GM10248 (cell line): ENCODE measurements at regions of chr6 and their contacts with region 1.

Region 1: GRCh38 chr6:41920921-41921711 is at the starts of genes BYSL and MED20:
- DNase-seq: peak; percentile 96
- CTCF ChIP-seq: peak; percentile 92

Region 2: DNA sequence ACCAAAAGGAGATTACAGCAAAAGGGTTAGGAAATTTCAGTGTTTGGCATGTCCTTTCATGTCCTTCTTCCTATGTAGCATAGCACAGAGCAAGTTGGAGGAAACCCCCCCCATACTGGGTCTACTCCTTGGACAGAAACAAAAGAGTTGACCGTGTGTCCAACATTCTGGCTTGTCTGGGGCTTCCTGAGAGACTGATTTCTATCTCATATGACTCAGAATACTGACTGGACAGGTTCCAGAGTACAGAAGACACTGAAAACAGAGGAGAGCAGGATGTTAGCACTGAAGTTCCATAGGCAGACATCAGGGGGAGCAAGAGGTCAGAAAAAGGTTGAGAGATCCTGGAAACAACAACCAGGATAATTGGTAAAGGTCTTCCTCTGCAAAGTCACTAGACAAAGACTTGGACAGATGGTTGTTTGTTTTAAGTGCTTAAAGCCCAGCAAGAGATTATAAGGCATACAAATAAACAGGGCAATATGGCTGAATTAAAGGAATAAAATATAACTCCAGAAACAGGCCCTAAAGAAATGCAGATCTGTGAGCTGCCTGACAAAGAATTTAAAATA is 74.4 kb before region 1 on chr6:
- CTCF ChIA-PET with region 1: interaction called, 11 read pairs
- POLR2A ChIA-PET with region 1: no interaction called
- DNase-seq: peak; percentile 70
- CTCF ChIP-seq: peak; percentile 61

Region 3: DNA sequence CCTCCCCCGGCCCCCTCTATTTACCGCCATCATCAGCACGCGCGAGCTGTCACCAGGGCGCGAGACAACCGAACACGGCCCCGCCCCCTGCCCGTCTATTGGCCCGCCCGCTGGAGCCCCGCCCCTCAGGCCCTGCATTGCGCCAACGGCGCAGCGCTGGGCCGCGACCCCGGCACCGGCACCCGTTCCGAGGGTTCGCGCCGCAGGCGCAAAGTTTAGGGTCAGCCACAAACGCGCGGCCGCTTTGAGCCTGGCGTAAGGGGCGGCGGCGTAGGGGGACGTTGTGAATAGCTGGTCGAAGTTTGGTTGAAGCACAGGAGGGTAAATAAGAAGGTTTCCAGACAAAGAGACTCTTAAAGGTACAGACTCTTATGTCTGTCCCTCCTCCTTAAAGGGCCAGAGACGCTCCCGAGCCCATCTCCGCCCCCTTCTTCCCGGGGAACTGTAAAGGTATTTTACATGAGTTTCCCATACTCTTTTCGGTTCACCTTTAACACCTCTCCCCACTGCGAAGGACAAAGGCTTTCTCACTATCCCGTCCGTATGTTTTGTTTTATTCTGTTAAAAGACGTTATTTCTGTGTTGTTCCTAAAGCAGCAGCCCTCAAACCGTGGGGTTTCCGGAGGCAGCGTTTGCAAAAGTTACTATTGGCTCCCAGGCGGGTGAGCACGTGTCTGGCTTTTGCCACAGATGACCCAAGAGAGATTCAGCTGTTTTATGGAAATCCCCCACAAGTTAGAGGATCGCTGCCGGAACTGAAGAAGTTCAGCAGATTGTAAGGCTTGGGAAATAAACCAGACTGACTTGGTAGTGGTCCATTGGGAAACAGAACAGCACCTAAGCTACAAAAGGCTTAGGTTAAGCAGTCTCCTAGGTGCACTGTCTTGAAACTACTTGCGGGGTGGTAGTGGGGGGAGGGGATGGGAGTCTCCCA is 25.5 kb before region 1 on chr6 and contains the start of gene USP49:
- CTCF ChIA-PET with region 1: interaction called, 16 read pairs
- POLR2A ChIA-PET with region 1: interaction called, 9 read pairs
- DNase-seq: peak; percentile 94
- CTCF ChIP-seq: no peak

Region 4: GRCh38 chr6:41901882-41902519 is 19.1 kb before region 1 on chr6:
- CTCF ChIA-PET with region 1: interaction called, 22 read pairs
- POLR2A ChIA-PET with region 1: no interaction called
- DNase-seq: peak; percentile 30
- CTCF ChIP-seq: peak; percentile 22

Region 5: GRCh38 chr6:41936073-41936837 is 15.1 kb after region 1 on chr6:
- CTCF ChIA-PET with region 1: interaction called, 116 read pairs
- POLR2A ChIA-PET with region 1: interaction called, 5 read pairs
- DNase-seq: peak; percentile 78
- CTCF ChIP-seq: peak; percentile 82

Region 6: DNA sequence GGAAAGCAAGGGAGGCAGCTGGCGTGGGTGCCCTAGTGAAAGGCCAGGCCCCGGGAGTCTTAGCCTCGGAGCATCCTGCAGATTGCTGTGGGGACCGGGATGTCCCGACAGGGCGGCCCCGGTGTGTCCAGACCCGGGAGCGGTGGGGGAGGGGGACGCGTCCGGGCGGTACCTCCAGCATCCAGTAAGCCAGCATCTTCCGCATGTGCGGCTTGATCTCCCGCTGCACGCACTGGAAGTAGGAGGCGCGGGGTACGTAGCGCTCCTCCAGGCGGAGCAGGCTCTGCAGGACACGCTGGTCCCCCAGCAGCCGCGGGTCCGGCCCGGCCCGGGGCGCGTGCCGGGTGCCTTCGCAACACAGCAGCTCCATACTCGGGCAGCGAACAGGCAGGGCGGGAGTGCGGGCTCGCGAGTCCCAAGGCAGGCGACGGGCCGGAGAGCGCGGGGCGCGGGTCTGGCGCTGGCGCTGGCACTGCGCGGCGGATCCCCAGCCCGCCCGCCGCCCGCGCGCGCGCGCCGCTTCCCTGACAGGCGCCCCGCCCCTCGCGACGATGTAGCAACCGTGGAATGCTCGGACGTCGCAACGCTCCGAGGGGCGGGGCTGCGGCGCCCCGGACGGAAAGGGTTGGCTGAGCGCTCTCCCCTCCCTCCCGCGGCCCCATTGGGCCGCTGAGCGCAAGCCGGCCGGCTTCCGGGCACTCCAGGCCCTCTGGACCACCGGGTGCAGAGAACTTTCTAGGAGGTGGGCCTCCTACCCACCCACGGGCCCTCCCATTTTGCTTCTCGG is 20.4 kb after region 1 on chr6 and contains the start of gene CCND3:
- CTCF ChIA-PET with region 1: interaction called, 116 read pairs
- POLR2A ChIA-PET with region 1: interaction called, 5 read pairs
- DNase-seq: peak; percentile 94
- CTCF ChIP-seq: no peak

Region 7: DNA sequence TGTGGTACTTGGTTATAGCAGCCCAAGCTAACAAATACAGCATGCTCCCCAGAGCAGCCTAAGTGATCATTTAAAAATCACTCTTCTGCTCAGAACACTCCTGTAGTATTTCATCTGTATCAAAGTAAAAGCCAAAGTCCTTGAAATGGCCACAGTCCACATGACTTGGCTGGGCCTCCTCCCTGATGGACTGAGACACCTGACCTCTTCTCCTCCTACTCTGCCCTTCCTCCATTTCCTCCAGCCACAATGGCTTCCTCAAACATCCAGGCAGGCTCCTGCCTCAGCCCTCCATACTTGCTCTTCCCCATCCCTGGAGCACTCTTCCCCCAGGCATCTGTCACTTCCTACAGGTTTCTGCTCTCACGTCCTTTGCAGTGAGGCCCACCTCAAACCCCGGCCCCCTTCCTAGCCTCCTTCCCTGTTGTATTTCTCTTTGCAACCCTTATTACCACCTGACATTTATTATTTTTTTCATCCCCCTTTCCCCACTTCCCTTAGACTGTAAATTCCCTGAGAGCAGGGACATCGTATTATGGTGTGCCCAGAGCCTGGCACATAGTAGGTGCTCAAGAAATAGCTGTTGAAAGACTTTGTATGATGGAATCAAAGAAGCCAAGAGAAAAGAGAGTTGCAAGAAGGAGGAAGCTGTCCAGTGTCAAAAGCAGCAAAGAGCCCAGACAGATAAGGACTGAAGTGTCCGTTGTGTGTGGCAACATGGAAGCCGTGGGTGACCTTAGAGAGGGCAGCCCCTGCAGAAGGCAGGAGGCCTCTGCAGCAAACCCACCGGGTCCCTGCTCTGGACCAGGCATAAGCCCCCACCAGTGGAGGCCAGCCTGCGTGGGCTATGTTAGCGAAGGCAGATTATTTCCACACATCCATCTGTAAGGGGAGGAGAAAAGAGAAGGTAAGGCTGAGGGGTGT is 443.1 kb after region 1 on chr6:
- CTCF ChIA-PET with region 1: no interaction called
- POLR2A ChIA-PET with region 1: no interaction called
- DNase-seq: no peak
- CTCF ChIP-seq: no peak